IMR-90 (cell line): ENCODE measurements at regions of chr15 and their contacts with region 1.

Region 1: GRCh38 chr15:96750361-96750760 is 419.9 kb downstream of the NR2F2 start:
- DNase-seq: no peak
- ATAC-seq: no peak
- H3K4me3 ChIP-seq: no peak overlapping the region
- H3K27ac ChIP-seq: no peak overlapping the region
- H3K4me1 ChIP-seq: no peaks in the 10 kb centered on the region
- H3K27me3 ChIP-seq: no peaks in the 10 kb centered on the region
- CTCF ChIP-seq: no peak
- POLR2A ChIP-seq: no peak
- RAD21 ChIP-seq: no peak

Region 2: GRCh38 chr15:96735632-96736240 is 14.6 kb before region 1 on chr15:
- CTCF ChIA-PET with region 1: no interaction called
- POLR2A ChIA-PET with region 1: no interaction called
- dilution Hi-C with region 1: no loop called
- in situ Hi-C with region 1: no loop called
- intact Hi-C with region 1: loop called (anchors 2 kb)
- DNase-seq: no peak
- ATAC-seq: no peak
- H3K4me3 ChIP-seq: no peak overlapping the region
- H3K27ac ChIP-seq: no peak overlapping the region
- H3K4me1 ChIP-seq: no peaks in the 10 kb centered on the region
- H3K27me3 ChIP-seq: no peaks in the 10 kb centered on the region
- CTCF ChIP-seq: no peak
- POLR2A ChIP-seq: no peak
- RAD21 ChIP-seq: no peak